HepG2 (cell line): ENCODE measurements at regions of chr7 and their contacts with region 1.

Region 1: GRCh38 chr7:36291387-36292316 is 98.0 kb upstream of the ANLN start:
- DNase-seq: peak; percentile 81
- ATAC-seq: peak; percentile 66
- H3K4me3 ChIP-seq: peak overlapping the region in 1 of 3 experiments; percentile 49; a peak in 2 of 6 replicates
- H3K27ac ChIP-seq: peak overlapping the region; percentile 91
- H3K4me1 ChIP-seq: peaks cover 63% of the 10 kb centered on the region
- H3K27me3 ChIP-seq: no peaks in the 10 kb centered on the region
- CTCF ChIP-seq: peak; percentile 99
- EP300 ChIP-seq: peak in 1 of 2 experiments; percentile 67; a peak in 2 of 4 replicates
- POLR2A ChIP-seq: no peak
- RAD21 ChIP-seq: peak; percentile 97

Region 2: DNA sequence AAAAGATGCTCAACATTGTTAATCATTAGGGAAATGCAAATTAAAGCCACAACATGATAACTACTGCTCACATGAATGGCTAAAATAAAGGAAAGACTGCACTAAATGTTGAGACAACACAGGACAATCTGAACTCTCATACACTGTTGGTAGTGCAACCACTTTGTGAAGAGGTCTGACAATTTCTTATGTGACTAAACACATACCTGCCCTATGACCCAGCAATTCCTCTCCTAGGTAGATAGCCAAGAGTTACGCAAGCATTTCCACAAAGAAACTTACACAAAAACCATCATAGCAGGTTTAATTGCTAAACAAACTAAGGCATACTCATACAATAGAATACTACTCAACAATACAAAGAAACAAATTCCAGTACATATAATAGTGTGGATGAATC is 554.9 kb before region 1 on chr7:
- CTCF ChIA-PET with region 1: no interaction called
- POLR2A ChIA-PET with region 1: no interaction called
- in situ Hi-C with region 1: no loop called
- intact Hi-C with region 1: no loop called
- DNase-seq: peak; percentile 85
- ATAC-seq: peak; percentile 87
- H3K4me3 ChIP-seq: no peak overlapping the region
- H3K27ac ChIP-seq: no peak overlapping the region
- H3K4me1 ChIP-seq: peaks cover 59% of the 10 kb centered on the region
- H3K27me3 ChIP-seq: no peaks in the 10 kb centered on the region
- CTCF ChIP-seq: no peak
- EP300 ChIP-seq: peak in 1 of 2 experiments; percentile 71; a peak in 1 of 4 replicates
- POLR2A ChIP-seq: no peak
- RAD21 ChIP-seq: no peak

Region 3: DNA sequence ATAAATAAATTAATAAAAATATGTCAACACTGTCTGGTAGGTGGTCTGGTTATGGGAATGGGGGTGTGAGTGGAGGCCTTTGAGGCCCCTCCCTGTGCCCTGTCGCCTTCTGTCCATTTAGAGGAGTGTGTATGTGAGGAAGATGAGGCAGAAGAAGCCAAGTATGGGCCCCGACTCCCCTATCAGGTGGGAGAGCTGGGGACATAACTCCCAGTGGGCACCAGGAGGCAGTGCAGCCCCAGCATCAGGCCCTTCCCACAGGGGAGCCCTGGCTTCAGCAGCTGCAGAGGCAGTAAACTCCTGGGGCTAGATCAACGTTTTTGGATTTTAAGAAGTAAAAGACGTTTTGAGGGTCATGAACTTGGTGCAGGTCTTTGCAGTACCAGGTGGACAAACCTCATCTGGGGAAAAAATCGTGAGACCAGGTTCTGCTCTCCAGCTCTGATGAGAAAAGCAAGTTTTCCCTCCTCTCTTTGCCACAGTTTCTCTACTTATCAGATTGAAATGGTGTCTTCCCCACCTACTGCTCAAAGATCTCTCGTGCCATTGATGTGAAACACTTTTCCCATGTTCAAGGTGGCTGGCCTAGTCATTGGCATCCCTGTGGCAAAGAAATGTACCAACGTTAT is 306.4 kb before region 1 on chr7:
- CTCF ChIA-PET with region 1: interaction called, 55 read pairs
- POLR2A ChIA-PET with region 1: interaction called, 15 read pairs
- in situ Hi-C with region 1: no loop called
- intact Hi-C with region 1: loop called (anchors 1 kb)
- DNase-seq: peak; percentile 52
- ATAC-seq: peak; percentile 99
- H3K4me3 ChIP-seq: no peak overlapping the region
- H3K27ac ChIP-seq: no peak overlapping the region
- H3K4me1 ChIP-seq: peaks cover 14% of the 10 kb centered on the region; the same call in 1 of the 2 replicates
- H3K27me3 ChIP-seq: peaks cover 0 to 10% of the 10 kb centered on the region in 2 experiments; a peak in 2 of 5 replicates
- CTCF ChIP-seq: peak; percentile 95
- EP300 ChIP-seq: no peak
- POLR2A ChIP-seq: no peak
- RAD21 ChIP-seq: peak; percentile 95

Region 4: DNA sequence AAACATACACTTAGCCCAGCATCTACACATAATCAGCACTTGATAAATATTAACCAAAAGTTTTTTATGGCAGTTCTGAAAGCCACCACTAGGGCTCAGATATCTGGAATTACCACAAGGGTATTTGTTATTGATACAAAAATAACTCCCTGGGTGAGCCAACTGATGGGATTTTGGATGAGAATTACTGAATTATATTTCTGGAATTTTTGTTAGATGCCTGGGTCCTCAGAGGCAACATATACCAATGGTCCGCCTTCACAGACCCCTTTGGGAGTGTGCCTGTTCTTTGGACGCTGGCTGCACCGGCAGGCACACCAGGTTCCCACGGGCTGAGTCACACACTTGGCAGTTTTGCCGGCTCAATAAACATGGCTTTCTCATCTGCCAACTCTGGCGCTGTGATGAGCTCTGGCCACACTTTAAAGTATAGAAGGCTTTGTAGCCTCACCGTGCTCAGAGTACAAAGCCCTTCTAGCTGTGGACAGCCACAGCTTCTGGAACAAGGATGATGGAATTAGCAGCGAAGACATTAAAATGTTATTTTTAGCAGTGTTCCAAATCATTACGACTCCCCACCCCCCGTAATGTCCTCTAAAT is 163.1 kb before region 1 on chr7:
- CTCF ChIA-PET with region 1: interaction called, 11 read pairs
- POLR2A ChIA-PET with region 1: interaction called, 4 read pairs
- in situ Hi-C with region 1: no loop called
- intact Hi-C with region 1: loop called (anchors 2 kb)
- DNase-seq: peak; percentile 76
- ATAC-seq: peak; percentile 92
- H3K4me3 ChIP-seq: peak overlapping the region; percentile 14 to 42 (median 16); a peak in 3 of 6 replicates
- H3K27ac ChIP-seq: no peak overlapping the region
- H3K4me1 ChIP-seq: peaks cover 36% of the 10 kb centered on the region
- H3K27me3 ChIP-seq: peaks cover 1 to 11% of the 10 kb centered on the region in 2 experiments; a peak in 3 of 5 replicates
- CTCF ChIP-seq: peak; percentile 18; the same call in 1 of the 2 replicates
- EP300 ChIP-seq: no peak
- POLR2A ChIP-seq: no peak
- RAD21 ChIP-seq: no peak

Region 5: GRCh38 chr7:36250317-36250716 is 41.3 kb before region 1 on chr7:
- CTCF ChIA-PET with region 1: no interaction called
- POLR2A ChIA-PET with region 1: no interaction called
- in situ Hi-C with region 1: no loop called
- intact Hi-C with region 1: loop called (anchors 2 kb)
- DNase-seq: no peak
- ATAC-seq: no peak
- H3K4me3 ChIP-seq: no peak overlapping the region
- H3K27ac ChIP-seq: no peak overlapping the region
- H3K4me1 ChIP-seq: no peaks in the 10 kb centered on the region
- H3K27me3 ChIP-seq: no peaks in the 10 kb centered on the region
- CTCF ChIP-seq: no peak
- EP300 ChIP-seq: no peak
- POLR2A ChIP-seq: no peak
- RAD21 ChIP-seq: no peak